ENCODE measurements at regions of chr9 and their contacts with region 1.

Region 1: GRCh38 chr9:7055201-7055903 is 297.6 kb downstream of the KDM4C start:
- DNase-seq: no peak
- ATAC-seq: no peak
- H3K4me3 Mint-ChIP-seq: no peak overlapping the region
- H3K27ac Mint-ChIP-seq: no peak overlapping the region
- H3K4me1 Mint-ChIP-seq: peaks cover 31% of the 10 kb centered on the region
- H3K27me3 Mint-ChIP-seq: no peaks in the 10 kb centered on the region
- CTCF ChIP-seq: no peak

Region 2: DNA sequence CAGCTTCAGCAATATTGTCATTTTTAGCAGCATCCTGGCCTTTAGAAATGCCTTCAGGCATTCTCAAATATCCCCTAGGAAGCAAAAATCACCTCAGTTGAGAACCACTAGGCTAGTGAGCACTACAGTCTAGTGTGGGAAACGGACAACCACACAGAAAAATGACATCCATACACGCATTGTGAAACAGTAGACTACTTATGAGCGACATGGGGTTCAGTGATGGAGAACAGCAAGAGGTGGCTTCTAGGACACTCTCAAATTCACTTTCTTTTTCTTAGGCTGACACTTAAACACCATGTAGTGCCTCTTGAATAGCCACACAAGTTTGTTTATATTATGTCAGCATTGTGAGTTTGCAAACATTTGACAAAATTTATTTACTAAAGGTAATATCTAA is 94.6 kb before region 1 on chr9:
- CTCF ChIA-PET with region 1: no interaction called
- POLR2A ChIA-PET with region 1: no interaction called
- DNase-seq: no peak
- ATAC-seq: no peak
- H3K4me3 Mint-ChIP-seq: no peak overlapping the region
- H3K27ac Mint-ChIP-seq: no peak overlapping the region
- H3K4me1 Mint-ChIP-seq: peaks cover 10% of the 10 kb centered on the region
- H3K27me3 Mint-ChIP-seq: no peaks in the 10 kb centered on the region
- CTCF ChIP-seq: no peak

Region 3: DNA sequence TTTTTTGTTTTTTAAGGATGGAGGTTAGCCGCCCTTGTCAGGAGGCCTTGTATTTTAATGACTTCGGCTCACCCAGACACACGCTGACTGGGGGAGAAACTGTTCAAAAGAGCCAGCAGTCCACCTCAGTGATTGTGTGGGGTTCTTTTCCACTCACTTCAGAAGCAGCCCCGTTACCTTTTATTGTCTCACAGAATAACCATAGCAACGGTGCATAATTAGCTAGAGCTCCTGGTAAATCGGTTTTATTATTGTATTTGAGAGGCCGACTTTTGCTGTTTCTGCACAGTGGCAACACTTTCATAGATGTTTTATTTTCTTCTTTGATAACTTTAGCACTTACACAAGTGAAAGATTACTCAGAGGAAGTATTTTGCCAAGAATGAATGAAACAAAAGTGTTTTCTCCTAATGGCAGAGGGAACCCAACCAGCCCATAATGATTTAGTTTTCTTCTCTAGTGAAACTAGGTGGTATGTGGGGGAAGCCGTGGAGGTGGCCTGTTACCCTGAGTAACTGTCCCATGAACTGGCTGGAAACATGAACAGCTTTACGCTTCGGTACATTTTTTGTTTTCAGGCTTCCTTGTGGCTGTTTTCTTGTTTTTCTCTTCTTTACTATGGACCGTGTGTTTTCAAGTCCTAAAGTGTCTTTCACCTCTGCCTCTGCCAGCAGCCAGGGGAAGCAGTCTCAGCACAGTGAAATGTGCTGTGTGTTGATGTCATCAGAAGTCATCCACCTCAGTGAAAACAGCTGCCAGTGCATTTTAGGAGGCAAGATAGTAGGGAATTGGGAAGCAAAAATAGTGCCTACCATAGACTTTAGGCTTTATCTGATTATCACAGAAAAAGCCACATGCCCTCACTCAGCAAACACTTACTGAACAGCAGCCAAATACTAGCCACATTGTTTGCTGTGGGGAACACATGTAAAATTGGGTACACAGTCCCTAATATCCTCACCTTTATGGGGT is 117.1 kb after region 1 on chr9:
- CTCF ChIA-PET with region 1: interaction called, 14 read pairs
- POLR2A ChIA-PET with region 1: no interaction called
- DNase-seq: no peak
- ATAC-seq: no peak
- H3K4me3 Mint-ChIP-seq: no peak overlapping the region
- H3K27ac Mint-ChIP-seq: 0 out of 2 replicates have a peak overlapping the region, but pooled peaks have one; percentile 45
- H3K4me1 Mint-ChIP-seq: peaks cover 14% of the 10 kb centered on the region
- H3K27me3 Mint-ChIP-seq: no peaks in the 10 kb centered on the region
- CTCF ChIP-seq: no peak

Region 4: DNA sequence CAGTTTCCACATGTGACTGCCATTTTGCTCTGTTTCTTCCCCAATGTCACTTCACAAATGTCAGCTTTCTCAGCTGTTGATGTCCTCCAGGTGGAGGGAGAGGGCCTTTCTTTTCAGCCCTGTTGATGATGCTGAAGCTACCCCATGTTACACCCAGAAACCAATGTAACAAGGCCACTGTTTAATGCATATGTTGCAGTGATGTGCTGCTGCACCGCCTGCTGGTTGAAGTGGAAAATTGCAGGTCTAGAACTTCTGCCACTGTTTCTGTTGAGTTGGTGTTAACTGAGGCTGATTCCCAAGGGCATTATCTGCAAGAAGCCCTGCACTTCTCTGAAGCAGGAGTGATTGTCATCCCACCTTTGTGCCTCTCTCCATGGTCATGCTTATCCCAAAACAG is 130.8 kb after region 1 on chr9:
- CTCF ChIA-PET with region 1: interaction called, 11 read pairs
- POLR2A ChIA-PET with region 1: no interaction called
- DNase-seq: peak; percentile 46
- ATAC-seq: peak; percentile 80
- H3K4me3 Mint-ChIP-seq: no peak overlapping the region
- H3K27ac Mint-ChIP-seq: no peak overlapping the region
- H3K4me1 Mint-ChIP-seq: peaks cover 11% of the 10 kb centered on the region
- H3K27me3 Mint-ChIP-seq: peaks cover 4% of the 10 kb centered on the region; the same call in 1 of the 2 replicates
- CTCF ChIP-seq: peak; percentile 82

Measured in WTC11 (cell line).